IMR-90 (cell line): ENCODE measurements at regions of chr2 and their contacts with region 1.

Region 1: GRCh38 chr2:108448678-108449493 is at the start of gene GCC2:
- DNase-seq: peak; percentile 91
- ATAC-seq: peak; percentile 97
- H3K4me3 ChIP-seq: peak within 1 kb of the TSS; percentile 86
- H3K27ac ChIP-seq: peak within 1 kb of the TSS; percentile 90
- H3K4me1 ChIP-seq: peaks cover 3% of the 10 kb centered on the region; the same call in 1 of the 2 replicates
- H3K27me3 ChIP-seq: no peaks in the 10 kb centered on the region
- CTCF ChIP-seq: no peak
- POLR2A ChIP-seq: peak; percentile 91
- RAD21 ChIP-seq: peak; percentile 11
- total RNA-seq, gene GCC2: 8.6 and 16.7 TPM in 2 replicates

Region 2: DNA sequence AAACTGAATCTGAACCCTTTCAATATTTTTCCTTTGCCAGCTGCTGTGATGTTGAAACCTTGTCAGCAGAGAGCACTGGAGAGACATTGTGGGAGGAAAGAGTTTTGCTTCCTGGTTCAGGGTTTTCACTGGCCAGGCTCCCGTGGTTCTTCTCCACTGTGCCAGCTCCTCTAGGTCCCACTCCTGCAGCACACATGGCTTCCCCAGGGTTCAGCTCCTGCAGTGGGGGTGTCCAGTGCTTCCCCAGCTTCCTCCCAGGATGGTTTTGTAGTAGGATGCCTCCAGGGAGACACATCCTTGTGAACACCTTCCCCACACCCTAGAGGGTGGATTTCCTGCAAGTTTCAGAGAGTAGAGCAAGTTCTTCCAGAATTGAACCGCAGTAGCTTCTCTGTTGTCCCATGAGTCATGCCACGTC is 233.1 kb before region 1 on chr2:
- CTCF ChIA-PET with region 1: no interaction called
- POLR2A ChIA-PET with region 1: no interaction called
- dilution Hi-C with region 1: no loop called
- in situ Hi-C with region 1: no loop called
- intact Hi-C with region 1: loop called (anchors 5 kb)
- DNase-seq: peak; percentile 51
- ATAC-seq: peak; percentile 71
- H3K4me3 ChIP-seq: no peak overlapping the region
- H3K27ac ChIP-seq: no peak overlapping the region
- H3K4me1 ChIP-seq: no peaks in the 10 kb centered on the region
- H3K27me3 ChIP-seq: no peaks in the 10 kb centered on the region
- CTCF ChIP-seq: peak; percentile 58
- POLR2A ChIP-seq: no peak
- RAD21 ChIP-seq: peak; percentile 68

Region 3: GRCh38 chr2:108396845-108397244 is 52.0 kb before region 1 on chr2:
- CTCF ChIA-PET with region 1: interaction called, 7 read pairs
- POLR2A ChIA-PET with region 1: no interaction called
- dilution Hi-C with region 1: no loop called
- in situ Hi-C with region 1: no loop called
- intact Hi-C with region 1: loop called (anchors 2 kb)
- DNase-seq: peak; percentile 47
- ATAC-seq: no peak
- H3K4me3 ChIP-seq: no peak overlapping the region
- H3K27ac ChIP-seq: no peak overlapping the region
- H3K4me1 ChIP-seq: no peaks in the 10 kb centered on the region
- H3K27me3 ChIP-seq: no peaks in the 10 kb centered on the region
- CTCF ChIP-seq: peak; percentile 49
- POLR2A ChIP-seq: no peak
- RAD21 ChIP-seq: peak; percentile 54

Region 4: DNA sequence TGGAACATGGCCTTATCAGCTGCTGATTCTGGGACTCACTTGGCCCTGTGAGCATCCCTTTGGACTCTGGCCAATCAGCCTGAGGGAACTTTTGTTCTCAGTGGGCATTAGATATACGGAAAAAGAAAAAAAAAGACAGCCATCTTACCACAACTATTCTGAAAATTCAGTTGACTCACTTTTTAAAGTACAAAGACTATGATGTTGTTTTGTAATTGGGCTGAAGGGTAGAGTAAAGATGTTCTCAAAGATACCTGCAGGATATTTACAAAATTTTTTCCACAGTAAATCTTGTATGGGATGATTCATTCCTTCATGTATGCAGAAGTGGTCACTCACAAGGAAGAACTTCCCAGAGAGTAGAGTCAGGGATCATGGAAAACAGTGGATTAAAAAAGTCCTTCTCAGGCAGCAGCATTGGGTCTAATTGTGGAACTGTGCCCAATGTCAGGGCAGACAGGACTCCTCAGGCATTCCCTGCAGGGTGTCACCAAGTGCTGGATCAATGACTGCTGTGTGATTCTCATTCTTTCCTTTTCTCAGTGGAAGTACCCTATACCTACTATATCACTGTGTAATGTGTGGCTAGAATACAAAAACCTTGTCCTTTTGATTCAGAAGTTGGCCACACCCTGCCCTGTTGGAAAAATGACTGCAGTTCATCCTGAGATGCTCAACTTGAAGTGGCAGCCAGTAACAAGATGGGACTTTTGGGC is 35.7 kb before region 1 on chr2:
- CTCF ChIA-PET with region 1: no interaction called
- POLR2A ChIA-PET with region 1: no interaction called
- dilution Hi-C with region 1: no loop called
- in situ Hi-C with region 1: no loop called
- intact Hi-C with region 1: loop called (anchors 5 kb)
- DNase-seq: peak; percentile 91
- ATAC-seq: peak; percentile 56
- H3K4me3 ChIP-seq: no peak overlapping the region
- H3K27ac ChIP-seq: peak overlapping the region; percentile 74
- H3K4me1 ChIP-seq: peaks cover 12% of the 10 kb centered on the region
- H3K27me3 ChIP-seq: no peaks in the 10 kb centered on the region
- CTCF ChIP-seq: no peak
- POLR2A ChIP-seq: no peak
- RAD21 ChIP-seq: no peak